Caco-2 (cell line): ENCODE measurements at regions of chr10 and their contacts with region 1.

Region 1: DNA sequence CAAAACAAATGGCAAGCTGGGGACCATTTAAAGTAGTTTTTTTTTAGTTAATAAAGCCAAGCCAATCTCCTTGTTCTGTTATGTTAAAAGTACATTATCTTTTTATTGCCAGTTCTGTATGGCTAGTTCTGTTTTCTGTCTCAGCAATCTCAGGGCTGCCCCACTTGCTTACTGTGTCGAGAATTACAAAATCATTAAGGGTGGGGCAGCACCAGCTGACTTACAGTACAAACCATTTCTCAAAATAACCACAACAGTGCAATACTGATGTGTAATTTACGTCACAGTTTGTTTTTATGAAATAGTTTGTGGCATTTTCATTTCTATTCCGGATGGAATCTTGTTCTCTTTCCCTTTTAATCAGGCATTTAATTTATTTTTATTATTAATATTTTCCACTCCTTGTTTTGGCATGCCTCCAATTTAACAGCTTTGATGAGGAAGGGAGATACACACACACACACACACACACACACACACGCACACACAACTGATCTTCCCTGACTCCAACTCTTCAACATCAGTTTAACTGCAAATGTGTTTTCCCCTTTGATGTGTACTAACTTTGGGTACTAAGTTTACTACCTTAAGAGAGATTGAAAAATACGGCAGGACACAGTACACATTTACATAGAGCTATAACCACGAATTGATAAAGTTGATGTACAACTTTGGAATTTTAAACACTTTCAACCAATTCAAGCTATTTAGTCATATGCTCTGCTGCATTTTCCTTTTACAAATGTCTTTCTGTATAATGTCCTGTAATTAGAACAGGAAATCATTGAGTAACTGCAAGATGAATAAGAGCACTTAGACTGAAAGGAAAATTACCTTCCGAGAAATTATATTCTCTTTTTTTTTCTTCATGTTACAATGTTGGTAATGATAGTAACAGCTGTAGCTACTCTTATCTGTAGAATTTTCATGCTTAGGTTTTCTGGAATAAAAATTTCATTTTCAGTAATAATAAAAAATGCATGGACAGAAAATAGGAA is 91.5 kb downstream of the ARID5B start:
- DNase-seq: no peak
- H3K4me3 ChIP-seq: no peak overlapping the region
- H3K4me3 Mint-ChIP-seq: peak overlapping the region; percentile 1
- H3K27ac Mint-ChIP-seq: peak overlapping the region; percentile 34
- H3K4me1 ChIP-seq: peaks cover 59% of the 10 kb centered on the region
- H3K4me1 Mint-ChIP-seq: peaks cover 38% of the 10 kb centered on the region
- H3K27me3 ChIP-seq: no peaks in the 10 kb centered on the region
- H3K27me3 Mint-ChIP-seq: no peaks in the 10 kb centered on the region
- CTCF ChIP-seq: no peak

Region 2: DNA sequence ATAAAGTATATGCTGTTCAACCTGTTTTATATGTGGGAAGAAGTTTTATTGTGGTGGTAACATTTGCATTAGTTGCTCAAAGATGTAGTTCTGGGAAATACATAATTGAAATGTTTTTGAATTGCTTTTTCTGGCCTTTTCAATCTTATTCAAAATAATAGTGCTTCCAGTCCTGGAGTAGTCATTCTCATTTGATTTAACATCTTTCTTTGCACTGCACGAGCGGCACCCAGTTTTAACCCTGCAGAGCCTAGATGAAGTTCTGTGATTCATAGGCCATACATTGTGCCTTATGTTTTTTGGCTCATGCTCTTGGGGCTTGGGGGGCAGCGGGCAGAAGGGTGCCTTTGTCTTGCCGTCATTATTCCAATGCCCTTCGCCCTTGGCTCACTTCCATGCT is 81.5 kb before region 1 on chr10:
- CTCF ChIA-PET with region 1: interaction called, 11 read pairs
- POLR2A ChIA-PET with region 1: no interaction called
- intact Hi-C with region 1: no loop called
- DNase-seq: no peak
- H3K4me3 ChIP-seq: no peak overlapping the region
- H3K4me3 Mint-ChIP-seq: no peak overlapping the region
- H3K27ac Mint-ChIP-seq: peak overlapping the region; percentile 9
- H3K4me1 ChIP-seq: peaks cover 78% of the 10 kb centered on the region
- H3K4me1 Mint-ChIP-seq: peaks cover 66% of the 10 kb centered on the region
- H3K27me3 ChIP-seq: no peaks in the 10 kb centered on the region
- H3K27me3 Mint-ChIP-seq: no peaks in the 10 kb centered on the region
- CTCF ChIP-seq: no peak